ENCODE measurements at regions of chr17 and their contacts with region 1.

Region 1: GRCh38 chr17:7136266-7136877 is 21.8 kb upstream of the ASGR2 start:
- DNase-seq: peak; percentile 81
- ATAC-seq: peak in 1 of 2 donors; percentile 38

Region 2: GRCh38 chr17:6913608-6914443 is 222.5 kb before region 1 on chr17:
- intact Hi-C with region 1: loop called in 1 of 2 experiments (anchors 10 kb)
- DNase-seq: peak; percentile 78
- ATAC-seq: peak; percentile 81

Region 3: DNA sequence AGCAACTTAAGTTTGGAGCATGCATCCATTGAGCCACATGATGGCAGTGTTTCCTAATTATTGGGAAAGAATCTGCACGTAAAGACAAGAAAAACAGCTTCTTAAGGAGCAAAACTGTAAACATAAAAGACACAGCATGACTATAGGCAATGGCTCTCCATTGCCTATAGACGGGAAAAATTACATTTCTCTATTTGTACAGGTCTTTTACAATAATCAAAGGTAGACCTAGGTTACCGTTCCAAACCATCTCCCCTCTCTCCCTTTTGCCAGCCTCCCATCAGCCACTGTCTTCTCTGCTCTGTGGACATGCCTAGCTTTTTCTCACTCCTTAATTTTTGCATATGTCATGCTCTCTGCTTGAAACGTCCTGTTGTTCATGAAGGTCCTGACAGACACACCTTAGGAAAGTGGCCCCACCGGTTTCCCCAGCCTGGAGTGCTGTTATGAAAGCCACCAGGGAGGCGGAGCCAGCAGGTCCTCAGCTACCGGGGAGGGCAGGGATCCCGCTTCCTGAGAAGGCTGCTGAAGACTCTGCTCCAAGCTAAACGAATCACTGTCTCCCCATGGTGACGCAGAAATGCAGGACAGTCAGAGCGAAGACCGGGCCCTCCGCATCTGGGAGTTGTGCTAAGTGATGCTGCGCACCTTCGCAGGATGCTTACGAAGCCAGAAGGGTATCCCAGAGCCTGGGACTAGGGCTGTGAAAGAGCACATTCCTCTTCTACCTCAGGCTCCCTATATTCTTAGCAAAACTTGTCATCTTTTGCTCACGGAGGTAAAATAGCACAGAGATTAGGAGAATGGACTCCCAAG is 90.3 kb before region 1 on chr17:
- intact Hi-C with region 1: loop called (anchors 1 to 5 kb)
- DNase-seq: no peak
- ATAC-seq: peak in 1 of 2 donors; percentile 23

Region 4: GRCh38 chr17:7056386-7056785 is 80.0 kb before region 1 on chr17:
- intact Hi-C with region 1: loop called (anchors 2 to 5 kb)
- DNase-seq: no peak
- ATAC-seq: no peak

Region 5: GRCh38 chr17:7191571-7192270 is 55.3 kb after region 1 on chr17:
- intact Hi-C with region 1: no loop called
- DNase-seq: no peak
- ATAC-seq: peak; percentile 77 to 84

Region 6: DNA sequence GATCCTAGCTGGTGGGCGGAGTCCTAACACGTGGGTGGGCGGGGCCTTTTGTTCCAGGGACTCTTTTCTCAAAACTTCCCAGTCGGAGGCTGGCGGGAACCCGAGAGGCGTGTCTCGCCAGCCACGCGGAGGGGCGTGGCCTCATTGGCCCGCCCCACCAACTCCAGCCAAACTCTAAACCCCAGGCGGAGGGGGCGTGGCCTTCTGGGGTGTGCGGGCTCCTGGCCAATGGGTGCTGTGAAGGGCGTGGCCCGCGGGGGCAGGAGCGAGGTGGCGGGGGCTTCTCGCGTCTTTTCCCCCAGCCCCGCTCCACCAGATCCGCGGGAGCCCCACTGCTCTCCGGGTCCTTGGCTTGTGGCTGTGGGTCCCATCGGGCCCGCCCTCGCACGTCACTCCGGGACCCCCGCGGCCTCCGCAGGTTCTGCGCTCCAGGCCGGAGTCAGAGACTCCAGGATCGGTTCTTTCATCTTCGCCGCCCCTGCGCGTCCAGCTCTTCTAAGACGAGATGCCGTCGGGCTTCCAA is 145.1 kb after region 1 on chr17 and contains the start of gene SLC2A4:
- intact Hi-C with region 1: no loop called
- DNase-seq: peak; percentile 95
- ATAC-seq: peak; percentile 85 to 93
- total RNA-seq, gene SLC2A4: 79.1 to 87.6 TPM